ENCODE measurements at regions of chr17 and their contacts with region 1.

Region 1: GRCh38 chr17:8222630-8223356 is 12.4 kb upstream of the AURKB start:
- DNase-seq: peak; percentile 99
- H3K4me3 ChIP-seq: peak overlapping the region; percentile 63 to 72 (median 68)
- H3K27ac ChIP-seq: peak overlapping the region; percentile 93 to 98 (median 96)
- H3K4me1 ChIP-seq: peaks cover 10 to 52% (median 46%) of the 10 kb centered on the region in 4 donors
- H3K27me3 ChIP-seq: no peaks in the 10 kb centered on the region
- CTCF ChIP-seq: no peak
- EP300 ChIP-seq: no peak
- POLR2A ChIP-seq: no peak

Region 2: GRCh38 chr17:8186787-8187516 is 35.8 kb before region 1 on chr17:
- intact Hi-C with region 1: loop called (anchors 1 kb)
- DNase-seq: peak; percentile 98
- H3K4me3 ChIP-seq: peak overlapping the region; percentile 70 to 90 (median 87)
- H3K27ac ChIP-seq: peak overlapping the region; percentile 93 to 99 (median 96)
- H3K4me1 ChIP-seq: peaks cover 37 to 59% (median 48%) of the 10 kb centered on the region in 4 donors
- H3K27me3 ChIP-seq: no peaks in the 10 kb centered on the region
- CTCF ChIP-seq: peak in 2 of 3 experiments; percentile 19 to 35
- EP300 ChIP-seq: no peak
- POLR2A ChIP-seq: no peak

Region 3: GRCh38 chr17:8248751-8249607 is 26.2 kb after region 1 on chr17 and contains the start of gene PFAS:
- intact Hi-C with region 1: loop called (anchors 1 kb)
- DNase-seq: peak; percentile 99
- H3K4me3 ChIP-seq: peak within 1 kb of the TSS; percentile 70 to 89 (median 72)
- H3K27ac ChIP-seq: peak within 1 kb of the TSS; percentile 97 to 99 (median 98)
- H3K4me1 ChIP-seq: peaks cover 13 to 33% (median 26%) of the 10 kb centered on the region in 4 donors
- H3K27me3 ChIP-seq: no peaks in the 10 kb centered on the region
- CTCF ChIP-seq: peak in 1 of 3 experiments; percentile 5
- EP300 ChIP-seq: no peak
- POLR2A ChIP-seq: peak; percentile 8
- total RNA-seq, gene PFAS: 8.8 to 15.2 (median 11.2) TPM

Region 4: DNA sequence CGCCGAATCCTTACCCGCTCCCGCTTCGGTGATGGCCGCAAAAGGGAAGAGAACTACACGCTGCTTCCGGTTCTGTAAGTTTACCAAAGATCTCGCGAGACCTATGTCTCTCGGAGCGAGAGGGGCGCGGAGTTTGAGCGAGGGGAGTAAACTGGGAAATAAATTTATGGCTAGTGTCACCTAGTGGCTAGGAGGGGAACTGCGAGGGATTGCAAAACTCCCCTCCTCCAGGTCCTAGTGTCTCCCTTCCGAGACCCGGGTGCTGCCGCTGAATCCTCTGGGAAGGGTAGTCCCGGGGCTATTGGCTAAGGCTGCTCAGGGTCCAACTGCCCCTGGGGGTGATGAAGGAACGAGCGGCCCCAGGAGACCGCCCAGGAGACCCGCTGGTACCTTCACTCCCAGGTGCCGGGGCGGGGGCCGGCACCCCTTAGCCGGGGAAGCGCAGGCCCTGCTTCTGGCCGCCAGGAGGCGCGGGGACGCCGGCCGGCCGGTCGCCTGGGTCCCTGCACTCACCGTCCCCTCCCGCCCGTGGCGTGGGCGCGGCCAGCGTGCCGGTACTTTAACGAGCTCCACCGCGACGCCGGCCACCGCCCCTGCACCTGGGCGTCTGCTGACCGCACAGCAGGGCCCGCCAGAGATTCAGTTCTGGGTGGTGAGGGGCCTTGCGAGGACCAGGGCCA is 160.5 kb after region 1 on chr17 and contains the start of gene RPL26:
- intact Hi-C with region 1: loop called (anchors 10 kb)
- DNase-seq: peak; percentile 99
- H3K4me3 ChIP-seq: peak within 1 kb of the TSS; percentile 72 to 84 (median 76)
- H3K27ac ChIP-seq: peak within 1 kb of the TSS; percentile 88 to 96 (median 90)
- H3K4me1 ChIP-seq: peaks cover 34 to 51% (median 44%) of the 10 kb centered on the region in 4 donors
- H3K27me3 ChIP-seq: no peaks in the 10 kb centered on the region
- CTCF ChIP-seq: peak; percentile 96 to 99 (median 99)
- EP300 ChIP-seq: no peak
- POLR2A ChIP-seq: no peak
- total RNA-seq, gene RPL26: 1,511 to 3,942 (median 2,863) TPM

Measured in esophagus muscularis mucosa (tissue), 4 donors.